Activated T-helper 2 cell treated with anti-CD3 and anti-CD28 coated beads, Interferon-gamma antibody, Interleukin-2, Interleukin-4, amounts not matched to agents 10 μg/mL and 5 μg/mL and 100 μg/mL, durations not matched to agents 14 hours and 24 hours and 36 hours (primary cell): ENCODE measurements at regions of chr3 and their contacts with region 1.

Region 1: DNA sequence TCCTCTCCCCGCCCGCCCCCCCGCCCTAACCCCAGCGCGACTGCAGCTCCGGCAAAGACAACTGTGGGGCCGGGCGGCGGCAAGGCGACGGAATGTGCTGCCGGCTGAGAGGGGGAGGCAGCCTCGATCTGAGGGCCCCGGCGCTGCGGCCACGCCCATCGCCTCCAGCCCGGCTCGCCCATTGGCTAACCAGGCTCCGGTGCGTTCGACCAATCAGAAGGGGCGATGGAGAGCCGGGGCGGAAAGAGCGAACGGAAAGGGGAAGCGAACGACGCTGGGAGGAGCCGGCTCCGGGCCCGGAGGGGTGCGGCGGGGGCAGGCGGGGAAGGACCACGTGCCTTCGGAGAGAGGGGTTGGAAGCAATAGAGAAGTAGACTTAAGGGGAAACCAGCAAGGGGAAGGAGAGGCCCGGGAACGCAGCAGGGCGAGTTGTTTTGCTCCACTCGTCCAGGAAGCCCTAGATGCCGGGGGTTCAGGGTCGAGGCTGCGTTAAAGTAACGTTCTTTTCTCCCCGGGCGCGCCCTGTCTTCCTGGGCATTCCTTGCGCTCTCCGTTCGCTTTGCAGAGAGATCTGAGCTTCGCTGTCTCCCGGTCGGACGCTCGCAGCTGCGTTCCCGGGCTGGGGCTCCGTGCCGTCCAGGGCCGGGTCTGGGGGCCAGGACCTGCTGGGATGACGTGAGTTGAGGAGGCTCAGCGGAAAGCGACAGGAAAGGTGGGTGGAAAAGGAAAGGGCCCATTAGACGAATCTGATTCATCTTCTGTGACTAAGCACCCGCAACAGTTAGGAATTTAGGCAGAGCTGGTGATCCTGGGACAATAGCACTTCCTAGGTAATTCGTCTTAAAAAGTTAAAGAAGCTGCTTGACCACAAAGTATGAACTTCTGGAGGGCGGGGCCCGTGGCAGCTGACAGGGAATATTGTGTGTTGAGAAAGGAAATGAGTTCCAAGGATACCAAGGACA is at the start of gene KPNA4:
- DNase-seq: peak; percentile 96
- H3K4me3 Mint-ChIP-seq: peak within 1 kb of the TSS; percentile 99
- H3K27ac Mint-ChIP-seq: peak within 1 kb of the TSS; percentile 96
- H3K4me1 Mint-ChIP-seq: peaks cover 61% of the 10 kb centered on the region
- H3K27me3 Mint-ChIP-seq: no peaks in the 10 kb centered on the region
- total RNA-seq, gene KPNA4: 69.8 and 71.2 TPM in 2 replicates

Region 2: GRCh38 chr3:160381470-160381869 is 184.3 kb before region 1 on chr3:
- intact Hi-C with region 1: no loop called
- DNase-seq: no peak
- H3K4me3 Mint-ChIP-seq: no peak overlapping the region
- H3K27ac Mint-ChIP-seq: no peak overlapping the region
- H3K4me1 Mint-ChIP-seq: peaks cover 14% of the 10 kb centered on the region
- H3K27me3 Mint-ChIP-seq: no peaks in the 10 kb centered on the region

Region 3: DNA sequence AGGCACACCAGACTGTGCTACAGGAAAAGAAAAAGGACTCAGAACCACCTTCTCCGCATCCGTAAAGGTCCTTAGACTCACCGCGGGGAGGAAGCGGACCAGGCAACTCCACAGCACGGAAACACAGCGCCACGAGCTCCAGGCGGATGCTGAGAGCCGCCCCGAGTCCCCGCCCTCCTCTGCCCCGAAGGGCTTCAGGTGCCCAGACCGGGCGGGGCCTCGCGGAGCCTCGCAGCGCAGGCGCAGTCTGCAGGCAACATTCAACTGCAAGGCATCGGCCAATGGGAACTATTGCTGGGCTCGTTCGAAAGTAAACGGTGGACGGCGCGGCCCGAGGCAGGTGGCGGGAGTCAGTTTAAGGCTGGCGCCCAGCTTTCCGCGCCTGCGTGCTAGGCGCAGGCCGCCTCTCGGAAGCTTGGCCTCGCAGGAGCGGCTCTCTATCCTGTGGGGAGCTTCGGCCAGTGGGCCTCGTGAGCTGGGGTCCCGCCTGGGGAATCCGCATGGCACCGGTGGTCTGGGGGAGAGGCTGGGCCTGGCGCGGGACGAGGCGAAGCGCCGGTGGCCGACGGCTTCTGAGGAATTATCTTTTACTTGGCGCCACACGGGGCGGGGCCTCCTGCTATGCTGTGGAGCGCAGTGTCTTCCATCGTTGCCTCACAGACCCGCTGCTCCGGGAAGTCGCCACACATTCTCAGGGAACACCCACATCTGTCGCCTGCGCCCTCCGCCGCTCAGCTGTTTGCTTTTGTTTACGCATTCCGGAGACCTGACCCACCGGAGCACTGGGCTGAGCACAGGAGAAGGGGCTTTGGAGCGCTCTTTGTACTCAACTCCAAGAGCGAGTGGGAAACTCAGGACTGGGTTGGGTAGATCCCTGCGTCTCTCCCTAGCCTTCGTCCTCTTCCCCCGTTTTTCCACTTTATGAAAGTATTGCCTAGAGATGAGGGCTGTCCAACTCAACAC is 115.8 kb before region 1 on chr3 and contains the start of gene TRIM59:
- intact Hi-C with region 1: loop called (anchors 2 kb)
- DNase-seq: peak; percentile 97
- H3K4me3 Mint-ChIP-seq: peak within 1 kb of the TSS; percentile 91
- H3K27ac Mint-ChIP-seq: peak within 1 kb of the TSS; percentile 95
- H3K4me1 Mint-ChIP-seq: peaks cover 33% of the 10 kb centered on the region
- H3K27me3 Mint-ChIP-seq: peaks cover 2% of the 10 kb centered on the region
- total RNA-seq, gene TRIM59: 35.9 and 37.0 TPM in 2 replicates

Region 4: GRCh38 chr3:161220850-161221753 is 655.4 kb after region 1 on chr3 and contains the start of gene NMD3:
- intact Hi-C with region 1: loop called (anchors 2 kb)
- DNase-seq: peak; percentile 88
- H3K4me3 Mint-ChIP-seq: peak within 1 kb of the TSS; percentile 94
- H3K27ac Mint-ChIP-seq: peak within 1 kb of the TSS; percentile 85
- H3K4me1 Mint-ChIP-seq: peaks cover 23% of the 10 kb centered on the region
- H3K27me3 Mint-ChIP-seq: peaks cover 7% of the 10 kb centered on the region
- total RNA-seq, gene NMD3: 70.1 and 70.4 TPM in 2 replicates